HEK293 (cell line): ENCODE measurements at regions of chr6 and their contacts with region 1.

Region 1: DNA sequence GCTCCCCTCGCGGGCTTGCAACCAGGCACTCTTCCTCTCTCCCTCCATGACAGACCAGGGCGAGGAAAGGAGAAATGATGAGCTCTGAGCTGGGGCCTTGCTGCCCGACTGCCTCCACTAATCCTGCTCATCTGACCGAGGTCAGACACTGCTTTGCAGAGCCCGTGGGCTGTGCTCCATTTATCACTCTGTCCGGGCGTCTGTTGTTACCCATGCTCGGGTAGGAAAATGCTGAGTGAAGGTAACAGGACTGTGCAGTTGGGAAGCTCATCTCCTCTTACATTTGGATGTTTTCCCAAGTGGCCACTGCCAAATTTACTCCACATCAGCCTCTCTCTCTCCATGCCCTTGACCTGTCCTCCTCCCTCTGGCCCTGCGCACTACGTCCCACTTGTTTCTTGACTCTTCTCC is 14.6 kb downstream of the RPS6KA2 start:
- H3K4me3 ChIP-seq: no peak overlapping the region
- H3K27ac ChIP-seq: no peak overlapping the region
- H3K4me1 ChIP-seq: no peaks in the 10 kb centered on the region
- CTCF ChIP-seq: no peak

Region 2: GRCh38 chr6:166589786-166590574 is 22.5 kb before region 1 on chr6:
- CTCF ChIA-PET with region 1: no interaction called
- POLR2A ChIA-PET with region 1: no interaction called
- H3K4me3 ChIP-seq: no peak overlapping the region
- H3K27ac ChIP-seq: no peak overlapping the region
- H3K4me1 ChIP-seq: no peaks in the 10 kb centered on the region; the same call in 1 of the 2 replicates
- CTCF ChIP-seq: no peak

Region 3: DNA sequence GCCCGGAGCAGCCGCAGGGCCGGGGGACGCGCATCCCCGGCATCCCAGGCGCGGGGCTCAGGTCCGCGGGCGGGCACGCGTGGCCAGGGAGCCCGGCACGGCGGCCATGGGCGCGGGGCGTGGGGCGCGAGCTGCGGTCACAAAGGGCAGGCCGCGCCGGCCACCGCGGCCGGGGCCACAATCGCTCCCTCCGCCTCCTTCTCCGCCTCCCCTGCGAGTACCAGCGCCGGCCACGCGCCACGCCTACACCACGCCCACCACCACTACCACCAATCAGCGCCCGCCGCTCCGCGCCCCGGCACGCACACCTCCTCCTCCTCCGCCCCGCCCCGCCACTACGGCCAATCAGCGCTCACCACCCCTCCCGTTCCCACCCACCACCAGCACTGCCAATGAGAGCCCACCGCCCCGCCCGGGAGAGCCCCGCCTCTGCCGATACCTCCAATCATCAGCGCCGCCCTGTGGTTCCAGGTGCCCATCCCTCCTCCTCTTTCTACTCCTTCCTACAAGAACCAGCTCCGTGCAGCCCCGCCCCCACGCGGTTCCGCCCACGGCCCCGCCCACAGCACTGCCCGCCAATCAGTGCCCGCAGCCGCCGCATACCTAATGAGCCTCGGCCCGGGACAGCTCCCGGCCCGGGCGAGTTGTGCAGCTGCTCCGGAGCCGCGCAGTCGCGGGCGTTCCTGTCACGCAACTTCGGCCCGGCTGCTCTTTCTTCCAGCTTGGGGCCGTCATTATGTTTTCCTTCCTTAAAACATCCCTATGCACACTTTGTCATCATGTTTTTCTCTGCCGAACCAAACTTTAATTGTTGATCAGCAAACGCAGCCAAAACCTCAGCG is 14.8 kb after region 1 on chr6 and contains the start of gene RPS6KA2:
- CTCF ChIA-PET with region 1: no interaction called
- POLR2A ChIA-PET with region 1: interaction called, 14 read pairs
- H3K4me3 ChIP-seq: peak within 1 kb of the TSS; percentile 47
- H3K27ac ChIP-seq: peak within 1 kb of the TSS; percentile 65; the same call in 1 of the 2 replicates
- H3K4me1 ChIP-seq: peaks cover 2% of the 10 kb centered on the region
- CTCF ChIP-seq: no peak